Endothelial cell of umbilical vein (primary cell): ENCODE measurements at regions of chr20 and their contacts with region 1.

Region 1: GRCh38 chr20:5719861-5720401 is 30.3 kb upstream of the SHLD1 start:
- DNase-seq: no peak
- H3K4me3 ChIP-seq: no peak overlapping the region
- H3K27ac ChIP-seq: no peak overlapping the region
- H3K4me1 ChIP-seq: peaks cover 13% of the 10 kb centered on the region
- H3K27me3 ChIP-seq: peaks cover 5 to 18% of the 10 kb centered on the region in 2 experiments
- CTCF ChIP-seq: no peak
- POLR2A ChIP-seq: no peak

Region 2: GRCh38 chr20:5749952-5750779 is 30.2 kb after region 1 on chr20 and contains the start of gene SHLD1:
- CTCF ChIA-PET with region 1: interaction called, 3 read pairs
- POLR2A ChIA-PET with region 1: interaction called, 4 read pairs
- dilution Hi-C with region 1: no loop called
- intact Hi-C with region 1: loop called (anchors 1 kb)
- DNase-seq: peak; percentile 75
- H3K4me3 ChIP-seq: peak within 1 kb of the TSS; percentile 37 to 85 (median 76)
- H3K27ac ChIP-seq: peak within 1 kb of the TSS; percentile 57
- H3K4me1 ChIP-seq: no peaks in the 10 kb centered on the region
- H3K27me3 ChIP-seq: no peaks in the 10 kb centered on the region
- CTCF ChIP-seq: no peak
- POLR2A ChIP-seq: no peak
- total RNA-seq, gene SHLD1: 4.7 and 5.1 TPM in 2 replicates